ENCODE measurements at regions of chr3 and their contacts with region 1.

Region 1: GRCh38 chr3:187164885-187165543 is 25.7 kb upstream of the RPL39L start:
- DNase-seq: no peak
- H3K4me3 ChIP-seq: no peak overlapping the region
- H3K27me3 ChIP-seq: peaks cover 9% of the 10 kb centered on the region
- CTCF ChIP-seq: peak; percentile 62

Region 2: GRCh38 chr3:186849374-186849975 is 315.5 kb before region 1 on chr3:
- CTCF ChIA-PET with region 1: interaction called, 25 read pairs
- POLR2A ChIA-PET with region 1: no interaction called
- DNase-seq: peak; percentile 4
- H3K4me3 ChIP-seq: no peak overlapping the region
- H3K27me3 ChIP-seq: peaks cover 10% of the 10 kb centered on the region
- CTCF ChIP-seq: peak; percentile 28

Region 3: GRCh38 chr3:187093320-187093719 is 71.7 kb before region 1 on chr3:
- CTCF ChIA-PET with region 1: no interaction called
- POLR2A ChIA-PET with region 1: no interaction called
- DNase-seq: no peak
- H3K4me3 ChIP-seq: no peak overlapping the region
- H3K27me3 ChIP-seq: no peaks in the 10 kb centered on the region
- CTCF ChIP-seq: no peak

Region 4: DNA sequence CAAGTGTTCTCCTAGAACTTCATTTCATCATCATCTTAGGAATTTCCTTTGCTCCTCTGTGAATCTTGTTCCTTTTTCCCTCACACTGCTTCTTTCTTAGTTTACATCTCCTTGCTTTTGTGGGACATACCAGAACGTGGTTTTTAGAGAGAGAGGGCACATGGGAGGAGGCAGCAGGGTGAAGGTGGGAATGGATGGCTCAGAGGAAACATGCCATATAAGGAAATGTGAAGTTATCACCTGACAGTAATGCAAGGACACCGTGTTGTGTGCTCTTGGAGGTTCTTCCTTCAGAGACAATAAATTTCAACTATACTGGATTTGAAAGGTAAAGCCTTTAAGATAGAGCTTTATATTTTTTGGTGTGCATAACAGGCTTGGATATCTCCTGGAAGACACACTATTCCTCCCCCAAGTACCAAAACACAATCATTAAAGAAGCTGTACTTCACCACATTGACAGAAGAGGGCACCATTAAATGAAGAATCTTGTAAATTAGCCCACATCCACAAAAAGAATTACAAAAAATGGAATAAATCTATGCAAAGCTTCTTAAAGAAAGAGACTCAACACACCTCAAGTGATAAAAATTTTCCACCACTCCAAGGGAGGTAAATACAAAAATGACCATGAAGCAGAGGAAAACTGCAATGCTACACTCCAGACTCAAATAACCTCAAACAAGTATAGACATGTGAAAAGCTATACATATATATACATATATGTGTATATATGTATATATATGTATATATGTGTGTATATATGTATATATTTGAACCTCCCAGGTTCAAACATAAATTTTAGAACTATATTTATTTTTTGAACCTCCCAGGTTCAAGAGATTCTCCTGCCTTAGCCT is 51.9 kb before region 1 on chr3:
- CTCF ChIA-PET with region 1: interaction called, 24 read pairs
- POLR2A ChIA-PET with region 1: interaction called, 8 read pairs
- DNase-seq: no peak
- H3K4me3 ChIP-seq: no peak overlapping the region
- H3K27me3 ChIP-seq: no peaks in the 10 kb centered on the region
- CTCF ChIP-seq: peak; percentile 56

Region 5: DNA sequence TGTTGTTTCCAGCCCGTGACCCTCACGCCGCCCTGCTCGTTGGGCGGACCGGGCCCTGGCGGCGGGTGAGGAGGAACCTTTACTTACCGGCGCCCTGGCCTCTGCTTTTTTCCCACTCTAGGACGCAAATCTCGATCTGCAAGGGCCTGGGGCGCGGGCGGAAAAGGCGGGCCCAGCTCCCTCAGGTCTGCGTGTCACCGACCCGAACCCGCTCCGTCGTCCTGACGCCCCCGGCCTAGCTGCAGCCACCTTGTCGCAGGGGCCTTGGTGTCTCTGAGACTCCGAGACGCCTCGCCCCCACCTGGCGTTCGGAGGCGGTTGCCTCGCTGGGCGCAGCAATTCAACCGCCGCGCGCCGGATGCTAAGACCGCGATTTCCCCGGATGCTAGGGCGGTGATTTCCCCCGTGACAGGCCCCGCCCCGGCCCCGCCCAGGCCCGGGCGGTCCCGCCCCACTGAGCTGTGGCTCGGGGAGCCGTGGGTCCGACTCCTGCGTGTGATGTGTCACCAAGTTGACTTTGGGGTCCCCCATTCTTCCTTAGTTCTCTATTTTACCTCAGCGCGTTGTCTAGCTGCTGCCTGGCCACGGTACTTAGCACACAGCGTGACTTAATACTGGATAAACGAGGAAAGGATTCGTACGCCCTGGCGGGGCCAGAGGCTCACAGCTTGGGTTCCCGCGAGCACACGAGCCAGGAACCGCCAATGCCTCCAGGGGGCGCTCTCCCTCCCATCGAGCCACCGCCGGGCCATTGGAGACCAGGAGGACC is 25.7 kb before region 1 on chr3 and contains the start of gene RPL39L:
- CTCF ChIA-PET with region 1: interaction called, 16 read pairs
- POLR2A ChIA-PET with region 1: no interaction called
- DNase-seq: peak; percentile 23
- H3K4me3 ChIP-seq: peak within 1 kb of the TSS; percentile 74
- H3K27me3 ChIP-seq: peaks cover 3% of the 10 kb centered on the region
- CTCF ChIP-seq: peak; percentile 96
- polyA plus RNA-seq, gene RPL39L: 16.2 and 23.3 TPM in 2 replicates

Region 6: GRCh38 chr3:187150599-187150998 is 14.4 kb before region 1 on chr3:
- CTCF ChIA-PET with region 1: interaction called, 10 read pairs
- POLR2A ChIA-PET with region 1: no interaction called
- DNase-seq: no peak
- H3K4me3 ChIP-seq: no peak overlapping the region
- H3K27me3 ChIP-seq: 0 out of 2 replicates have a peak, but pooled peaks cover 2% of the 10 kb centered on the region
- CTCF ChIP-seq: 0 out of 2 replicates have a peak, but pooled peaks have one; percentile 2

Region 7: GRCh38 chr3:187567661-187568121 is 402.7 kb after region 1 on chr3:
- CTCF ChIA-PET with region 1: no interaction called
- POLR2A ChIA-PET with region 1: no interaction called
- DNase-seq: peak; percentile 90
- H3K4me3 ChIP-seq: no peak overlapping the region
- H3K27me3 ChIP-seq: no peaks in the 10 kb centered on the region
- CTCF ChIP-seq: no peak

Region 8: GRCh38 chr3:187628169-187628568 is 463.2 kb after region 1 on chr3:
- CTCF ChIA-PET with region 1: no interaction called
- POLR2A ChIA-PET with region 1: no interaction called
- DNase-seq: no peak
- H3K4me3 ChIP-seq: no peak overlapping the region
- H3K27me3 ChIP-seq: no peaks in the 10 kb centered on the region
- CTCF ChIP-seq: no peak